ENCODE measurements at regions of chrX and their contacts with region 1.

Region 1: GRCh38 chrX:15511563-15511962 is 11.0 kb downstream of the BMX start:
- H3K4me3 ChIP-seq: no peak overlapping the region
- H3K27ac ChIP-seq: no peak overlapping the region
- H3K4me1 ChIP-seq: no peaks in the 10 kb centered on the region
- CTCF ChIP-seq: no peak

Region 2: GRCh38 chrX:15497865-15498264 is 13.7 kb before region 1 on chrX:
- CTCF ChIA-PET with region 1: interaction called, 14 read pairs
- POLR2A ChIA-PET with region 1: no interaction called
- H3K4me3 ChIP-seq: no peak overlapping the region
- H3K27ac ChIP-seq: no peak overlapping the region
- H3K4me1 ChIP-seq: no peaks in the 10 kb centered on the region
- CTCF ChIP-seq: 0 out of 2 replicates have a peak, but pooled peaks have one; percentile 37

Region 3: GRCh38 chrX:15545350-15545749 is 33.8 kb after region 1 on chrX:
- CTCF ChIA-PET with region 1: no interaction called
- POLR2A ChIA-PET with region 1: no interaction called
- H3K4me3 ChIP-seq: no peak overlapping the region
- H3K27ac ChIP-seq: no peak overlapping the region
- H3K4me1 ChIP-seq: no peaks in the 10 kb centered on the region
- CTCF ChIP-seq: no peak

Measured in HEK293 (cell line).